ENCODE measurements at regions of chrX and their contacts with region 1.

Region 1: DNA sequence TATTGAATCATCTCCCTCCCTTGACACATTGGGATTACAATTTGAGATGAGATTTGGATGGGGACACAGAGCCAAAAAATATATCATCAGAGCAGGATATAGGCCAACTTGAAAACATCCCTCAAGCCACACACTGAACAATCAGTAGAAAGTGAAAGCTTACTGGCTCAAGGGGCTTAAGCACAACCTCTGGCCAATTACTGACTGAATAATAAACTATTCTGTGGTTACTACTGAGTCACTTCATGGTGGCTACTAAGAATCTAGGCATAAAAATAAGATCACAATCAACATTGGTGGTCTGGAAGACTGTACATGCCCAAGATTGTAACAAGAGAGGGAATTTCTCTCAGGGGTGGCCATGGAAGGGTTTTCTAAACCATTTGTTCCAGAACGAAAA is 27.4 kb upstream of the GPR174 start:
- DNase-seq: no peak
- ATAC-seq: no peak
- H3K4me3 ChIP-seq: no peak overlapping the region
- H3K4me3 Mint-ChIP-seq: peak overlapping the region; percentile 43
- H3K27ac ChIP-seq: no peak overlapping the region
- H3K27ac Mint-ChIP-seq: peak overlapping the region; percentile 77
- H3K4me1 ChIP-seq: peaks cover 24% of the 10 kb centered on the region
- H3K4me1 Mint-ChIP-seq: peaks cover 47% of the 10 kb centered on the region
- H3K27me3 ChIP-seq: no peaks in the 10 kb centered on the region
- H3K27me3 Mint-ChIP-seq: no peaks in the 10 kb centered on the region
- CTCF ChIP-seq: no peak

Region 2: GRCh38 chrX:79138658-79139241 is 21.7 kb after region 1 on chrX:
- CTCF ChIA-PET with region 1: interaction called, 3 read pairs
- POLR2A ChIA-PET with region 1: interaction called, 3 read pairs
- intact Hi-C with region 1: loop called in 1 of 2 experiments (anchors 2 kb)
- DNase-seq: peak in 2 of 9 experiments; percentile 43 to 58
- ATAC-seq: no peak
- H3K4me3 ChIP-seq: no peak overlapping the region
- H3K4me3 Mint-ChIP-seq: peak overlapping the region; percentile 32
- H3K27ac ChIP-seq: peak overlapping the region in 1 of 2 experiments; percentile 67
- H3K27ac Mint-ChIP-seq: peak overlapping the region; percentile 77
- H3K4me1 ChIP-seq: peaks cover 27% of the 10 kb centered on the region
- H3K4me1 Mint-ChIP-seq: peaks cover 53% of the 10 kb centered on the region
- H3K27me3 ChIP-seq: no peaks in the 10 kb centered on the region
- H3K27me3 Mint-ChIP-seq: no peaks in the 10 kb centered on the region
- CTCF ChIP-seq: no peak